Endothelial cell of umbilical vein (primary cell): ENCODE measurements at regions of chr3 and their contacts with region 1.

Region 1: GRCh38 chr3:99544786-99545281 is 93.6 kb upstream of the COL8A1 start:
- DNase-seq: peak; percentile 100
- H3K4me3 ChIP-seq: no peak overlapping the region
- H3K27ac ChIP-seq: peak overlapping the region; percentile 97
- H3K4me1 ChIP-seq: peaks cover 77% of the 10 kb centered on the region
- H3K27me3 ChIP-seq: no peaks in the 10 kb centered on the region
- CTCF ChIP-seq: no peak
- POLR2A ChIP-seq: peak; percentile 55

Region 2: DNA sequence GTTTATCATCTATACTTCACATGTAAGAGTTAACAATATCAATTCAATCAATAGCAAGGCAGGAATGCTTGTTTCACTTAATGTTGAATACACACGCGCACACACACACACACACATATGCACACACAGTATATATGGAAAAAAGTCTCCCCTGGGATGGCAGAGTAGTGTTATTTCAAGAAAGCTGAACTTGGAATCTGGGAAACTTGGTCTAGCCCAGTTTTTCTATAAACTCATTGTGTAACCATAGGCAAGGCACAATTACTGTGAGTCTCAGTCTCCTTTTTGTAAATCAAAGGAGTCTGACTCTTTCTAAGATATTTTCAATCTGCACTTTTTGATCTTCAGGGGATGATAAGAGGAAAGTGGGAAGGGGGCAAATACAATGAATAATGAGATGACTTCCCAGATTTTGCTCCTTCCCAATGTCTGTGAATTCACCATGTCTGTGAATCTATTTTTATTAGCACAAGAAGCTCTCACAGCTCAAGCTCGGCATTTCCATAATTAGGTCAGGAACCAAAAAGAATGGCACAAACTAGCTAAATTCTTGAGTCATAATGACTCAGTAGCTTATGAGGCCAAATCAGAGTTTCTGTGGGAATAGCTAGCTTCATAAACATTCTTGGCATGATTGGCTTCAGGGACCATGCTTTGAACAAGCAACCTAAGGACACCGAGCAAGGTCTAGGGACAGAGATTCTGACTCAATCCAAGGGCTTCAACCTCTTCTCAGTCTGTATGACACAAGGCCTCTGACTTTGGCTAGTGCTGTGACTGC is 415.9 kb before region 1 on chr3:
- CTCF ChIA-PET with region 1: no interaction called
- POLR2A ChIA-PET with region 1: no interaction called
- dilution Hi-C with region 1: no loop called
- intact Hi-C with region 1: loop called (anchors 5 kb)
- DNase-seq: peak; percentile 91
- H3K4me3 ChIP-seq: no peak overlapping the region
- H3K27ac ChIP-seq: peak overlapping the region; percentile 76
- H3K4me1 ChIP-seq: peaks cover 23% of the 10 kb centered on the region
- H3K27me3 ChIP-seq: no peaks in the 10 kb centered on the region
- CTCF ChIP-seq: no peak
- POLR2A ChIP-seq: no peak

Region 3: DNA sequence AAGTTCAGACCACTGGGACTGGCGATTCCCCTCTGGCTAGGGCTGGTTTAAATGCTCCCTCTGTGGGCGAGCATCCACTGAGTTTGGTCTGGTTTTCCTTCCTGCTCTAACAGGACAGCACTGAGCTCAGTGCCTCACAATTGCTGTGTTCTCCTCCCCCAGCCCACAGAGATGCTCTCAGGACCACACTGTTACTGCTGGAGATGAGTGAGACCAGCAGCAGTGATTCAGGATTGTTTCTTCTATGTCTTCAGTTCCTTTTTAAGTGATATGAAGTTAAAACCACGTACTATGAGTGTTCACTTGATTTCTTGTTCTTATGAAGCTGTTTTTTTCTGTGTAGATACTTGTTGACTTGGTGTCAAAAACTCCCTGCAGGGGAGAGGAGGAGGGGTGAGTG is 86.8 kb before region 1 on chr3:
- CTCF ChIA-PET with region 1: no interaction called
- POLR2A ChIA-PET with region 1: no interaction called
- dilution Hi-C with region 1: no loop called
- intact Hi-C with region 1: no loop called
- DNase-seq: no peak
- H3K4me3 ChIP-seq: no peak overlapping the region
- H3K27ac ChIP-seq: no peak overlapping the region
- H3K4me1 ChIP-seq: no peaks in the 10 kb centered on the region
- H3K27me3 ChIP-seq: no peaks in the 10 kb centered on the region
- CTCF ChIP-seq: no peak
- POLR2A ChIP-seq: no peak

Region 4: GRCh38 chr3:99532246-99532645 is 12.6 kb before region 1 on chr3:
- CTCF ChIA-PET with region 1: interaction called, 11 read pairs
- POLR2A ChIA-PET with region 1: no interaction called
- dilution Hi-C with region 1: no loop called
- intact Hi-C with region 1: no loop called
- DNase-seq: peak; percentile 88
- H3K4me3 ChIP-seq: no peak overlapping the region
- H3K27ac ChIP-seq: peak overlapping the region; percentile 5
- H3K4me1 ChIP-seq: no peaks in the 10 kb centered on the region
- H3K27me3 ChIP-seq: no peaks in the 10 kb centered on the region
- CTCF ChIP-seq: peak; percentile 75 to 81
- POLR2A ChIP-seq: no peak

Region 5: DNA sequence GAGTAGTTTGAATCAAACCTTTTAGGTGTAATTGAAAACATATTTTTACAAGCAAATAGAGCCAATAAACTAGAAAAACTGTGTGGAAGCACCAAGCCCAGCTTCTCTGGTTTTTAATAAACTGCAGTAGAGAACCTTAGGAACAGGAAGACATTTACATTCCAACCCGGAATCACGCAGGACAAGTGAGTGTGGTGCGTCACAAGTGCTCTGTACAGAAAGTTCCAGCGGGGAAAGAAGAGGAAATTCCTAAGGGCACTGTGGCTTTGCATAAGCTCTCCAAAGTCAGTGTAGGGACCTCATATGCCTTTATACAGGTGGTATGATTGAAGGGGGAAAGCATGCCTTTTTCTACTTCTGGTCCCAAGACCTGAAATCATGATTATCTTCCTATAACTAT is 115.1 kb after region 1 on chr3:
- CTCF ChIA-PET with region 1: no interaction called
- POLR2A ChIA-PET with region 1: no interaction called
- dilution Hi-C with region 1: no loop called
- intact Hi-C with region 1: no loop called
- DNase-seq: peak; percentile 78
- H3K4me3 ChIP-seq: peak overlapping the region in 1 of 3 experiments; percentile 25
- H3K27ac ChIP-seq: peak overlapping the region; percentile 98
- H3K4me1 ChIP-seq: peaks cover 34% of the 10 kb centered on the region
- H3K27me3 ChIP-seq: no peaks in the 10 kb centered on the region
- CTCF ChIP-seq: no peak
- POLR2A ChIP-seq: no peak

Region 6: DNA sequence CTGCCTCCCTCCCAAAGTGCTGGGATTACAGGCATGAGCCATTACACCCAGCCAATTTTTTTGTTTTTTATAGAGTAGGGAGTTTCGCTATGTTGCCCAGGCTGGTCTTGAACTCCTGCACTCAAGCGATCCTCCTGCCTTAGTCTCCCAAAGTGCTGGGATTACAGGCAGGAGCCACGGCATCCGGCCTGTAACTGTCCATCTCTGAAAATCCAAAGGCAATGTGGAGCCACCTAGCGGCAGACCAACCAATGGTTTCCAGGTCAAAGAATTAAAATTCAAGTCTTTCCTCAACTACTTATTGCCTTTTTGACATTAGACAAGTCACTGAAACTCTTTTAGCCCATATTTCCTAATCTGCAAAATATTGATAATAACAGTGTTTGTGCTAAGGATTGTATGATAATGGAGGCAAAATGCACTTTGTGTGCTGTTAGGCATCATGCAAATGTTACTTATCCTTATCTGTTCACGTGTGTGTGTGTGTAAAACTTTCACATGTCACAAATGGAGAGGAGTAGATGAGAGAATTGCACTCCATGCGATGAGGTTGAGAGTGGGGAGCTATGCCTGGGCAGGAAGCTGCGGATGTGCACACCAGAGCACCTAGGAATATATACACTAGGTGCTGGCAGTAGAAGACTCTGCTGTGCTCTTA is 142.2 kb after region 1 on chr3:
- CTCF ChIA-PET with region 1: interaction called, 5 read pairs
- POLR2A ChIA-PET with region 1: no interaction called
- dilution Hi-C with region 1: no loop called
- intact Hi-C with region 1: loop called (anchors 2 kb)
- DNase-seq: peak; percentile 71
- H3K4me3 ChIP-seq: no peak overlapping the region
- H3K27ac ChIP-seq: no peak overlapping the region
- H3K4me1 ChIP-seq: peaks cover 11% of the 10 kb centered on the region
- H3K27me3 ChIP-seq: no peaks in the 10 kb centered on the region
- CTCF ChIP-seq: peak; percentile 54 to 55
- POLR2A ChIP-seq: peak; percentile 4